Lower lobe of right lung (tissue), 2 donors: ENCODE measurements at regions of chr5 and their contacts with region 1.

Region 1: DNA sequence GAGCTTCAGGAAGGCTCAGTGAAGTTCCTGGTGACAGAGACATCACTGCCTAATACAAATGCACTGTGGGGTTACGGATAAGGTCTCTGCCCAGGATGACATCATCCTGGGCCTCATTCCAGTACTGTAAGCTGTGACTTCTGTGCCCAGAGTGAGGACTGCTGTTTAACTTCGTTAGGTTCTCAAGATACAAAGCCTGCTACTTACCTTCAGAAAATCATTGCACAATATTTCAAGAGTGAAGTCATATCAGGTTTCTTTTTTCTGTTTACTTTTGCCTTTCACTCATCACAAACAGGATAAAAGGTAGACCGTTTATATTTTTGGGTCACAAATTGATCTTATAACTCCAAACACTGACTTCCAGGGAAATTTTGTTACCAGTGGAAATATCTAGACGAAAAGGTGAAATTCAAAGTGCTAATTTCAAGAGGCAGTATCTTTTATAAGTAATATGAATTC is 241.2 kb downstream of the PIK3R1 start:
- DNase-seq: no peak
- ATAC-seq: peak; percentile 91 to 96
- H3K4me3 ChIP-seq: no peak overlapping the region
- H3K27ac ChIP-seq: no peak overlapping the region
- H3K4me1 ChIP-seq: peaks cover 12% of the 10 kb centered on the region
- H3K27me3 ChIP-seq: no peaks in the 10 kb centered on the region
- CTCF ChIP-seq: no peak

Region 2: GRCh38 chr5:68287976-68288706 is 168.6 kb before region 1 on chr5:
- intact Hi-C with region 1: loop called (anchors 10 kb)
- DNase-seq: peak; percentile 69
- ATAC-seq: peak; percentile 87 to 88
- H3K4me3 ChIP-seq: peak overlapping the region; percentile 59
- H3K27ac ChIP-seq: peak overlapping the region; percentile 78
- H3K4me1 ChIP-seq: peaks cover 90% of the 10 kb centered on the region
- H3K27me3 ChIP-seq: no peaks in the 10 kb centered on the region
- CTCF ChIP-seq: no peak